Posterior vena cava (tissue), 2 donors: ENCODE measurements at regions of chr15 and their contacts with region 1.

Region 1: GRCh38 chr15:100949691-100950090 is 30.5 kb downstream of the LRRK1 start:
- DNase-seq: no peak

Region 2: GRCh38 chr15:100928632-100929293 is 20.9 kb before region 1 on chr15:
- intact Hi-C with region 1: loop called in 1 of 2 experiments (anchors 1 kb)
- DNase-seq: no peak